ENCODE measurements at regions of chr15 and their contacts with region 1.

Region 1: DNA sequence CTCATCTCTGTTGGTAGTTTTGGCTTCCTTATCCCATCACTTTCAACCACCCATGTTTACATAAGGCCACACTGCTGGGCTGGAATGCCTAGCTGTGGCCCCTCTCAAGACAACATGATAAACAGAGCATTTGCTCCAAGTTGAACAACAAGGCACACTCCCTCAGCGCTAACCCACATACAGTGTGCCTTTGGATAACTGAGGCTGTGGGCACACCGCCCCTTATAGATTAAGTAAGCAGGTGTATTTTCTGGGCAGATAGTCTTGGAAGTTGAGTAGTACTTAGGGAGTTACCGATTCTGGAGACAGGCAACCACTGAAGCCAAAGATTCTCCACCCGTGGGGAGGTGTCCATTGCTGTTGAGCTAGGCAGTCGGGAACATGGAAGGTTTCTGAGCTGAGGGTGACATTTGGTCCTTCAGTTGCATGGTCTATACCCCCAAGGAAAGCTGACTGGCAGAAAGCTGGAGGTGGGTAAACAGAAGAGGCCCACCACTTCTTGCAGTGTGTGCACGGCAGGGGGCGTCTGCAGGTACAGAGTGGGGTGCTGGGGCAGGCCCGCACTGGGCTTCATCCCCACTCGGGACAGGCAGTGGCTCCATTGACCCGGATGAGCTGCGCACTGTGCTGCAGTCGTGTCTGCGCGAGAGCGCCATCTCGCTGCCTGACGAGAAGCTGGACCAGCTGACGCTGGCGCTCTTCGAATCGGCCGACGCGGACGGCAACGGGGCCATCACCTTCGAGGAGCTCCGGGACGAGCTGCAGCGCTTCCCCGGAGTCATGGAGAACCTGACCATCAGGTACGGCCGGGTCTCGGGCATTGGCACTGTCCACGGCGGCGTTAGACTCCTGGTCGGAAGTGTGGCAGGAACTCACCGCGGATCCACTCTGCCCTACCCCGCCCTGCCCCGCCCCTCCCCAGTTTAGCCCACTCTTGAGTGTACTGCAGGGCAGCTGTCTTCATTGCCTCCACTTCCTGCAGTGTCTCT is 16.8 kb downstream of the NOX5 start:
- H3K4me3 ChIP-seq: peak overlapping the region; percentile 46
- H3K27ac ChIP-seq: no peak overlapping the region
- H3K4me1 ChIP-seq: no peaks in the 10 kb centered on the region
- CTCF ChIP-seq: peak; percentile 98

Region 2: GRCh38 chr15:68252925-68253534 is 778.3 kb before region 1 on chr15:
- CTCF ChIA-PET with region 1: no interaction called
- POLR2A ChIA-PET with region 1: no interaction called
- H3K4me3 ChIP-seq: no peak overlapping the region
- H3K27ac ChIP-seq: no peak overlapping the region
- H3K4me1 ChIP-seq: 0 out of 2 replicates have a peak, but pooled peaks cover 2% of the 10 kb centered on the region
- CTCF ChIP-seq: peak; percentile 80

Region 3: DNA sequence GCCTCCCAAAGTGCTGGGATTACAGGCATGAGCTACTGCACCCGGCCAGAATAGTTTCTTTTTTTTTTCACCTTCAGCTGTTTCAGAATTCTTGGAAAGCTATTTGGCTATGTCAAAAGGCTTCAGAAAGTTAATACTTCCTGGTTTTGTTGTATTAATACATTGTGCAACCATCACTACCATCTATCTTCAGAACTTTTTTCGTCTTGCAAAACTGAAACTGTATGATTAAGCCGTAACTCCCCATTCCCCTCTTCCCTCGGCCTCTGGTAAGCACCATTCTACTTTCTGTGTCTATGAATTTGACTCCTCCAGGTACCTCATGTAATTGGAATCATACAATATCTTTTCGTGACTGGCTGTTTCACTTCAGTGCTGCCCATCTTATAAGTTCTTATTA is 22.0 kb before region 1 on chr15:
- CTCF ChIA-PET with region 1: interaction called, 21 read pairs
- POLR2A ChIA-PET with region 1: interaction called, 3 read pairs
- H3K4me3 ChIP-seq: no peak overlapping the region
- H3K27ac ChIP-seq: no peak overlapping the region
- H3K4me1 ChIP-seq: no peaks in the 10 kb centered on the region
- CTCF ChIP-seq: no peak

Region 4: GRCh38 chr15:69394556-69395282 is 363.4 kb after region 1 on chr15:
- CTCF ChIA-PET with region 1: no interaction called
- POLR2A ChIA-PET with region 1: no interaction called
- H3K4me3 ChIP-seq: no peak overlapping the region
- H3K27ac ChIP-seq: no peak overlapping the region
- H3K4me1 ChIP-seq: no peaks in the 10 kb centered on the region; the same call in 1 of the 2 replicates
- CTCF ChIP-seq: peak; percentile 97

Measured in HEK293 (cell line).